WTC11 (cell line): ENCODE measurements at regions of chr2 and their contacts with region 1.

Region 1: DNA sequence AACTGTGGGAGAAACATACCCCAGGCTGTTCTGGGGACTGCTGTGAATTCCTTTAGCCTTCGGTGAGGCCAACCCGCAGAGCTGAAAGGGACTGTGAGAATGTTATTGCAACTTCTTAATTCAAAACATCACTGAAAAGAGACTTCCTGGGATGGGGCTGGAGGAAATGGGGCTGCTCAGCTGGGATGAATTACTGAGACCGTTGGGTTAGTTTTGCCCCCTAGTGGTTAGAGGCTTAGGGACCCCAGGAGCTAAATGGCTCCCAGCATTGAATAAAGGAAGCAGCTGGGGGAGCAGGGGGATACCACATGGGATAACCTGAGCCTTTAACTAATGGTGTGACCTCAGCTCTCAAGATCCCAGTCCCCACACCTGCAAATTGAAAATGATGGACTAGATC is 941.1 kb upstream of the FANCL start:
- DNase-seq: peak; percentile 61
- ATAC-seq: peak; percentile 97
- H3K4me3 Mint-ChIP-seq: no peak overlapping the region
- H3K27ac Mint-ChIP-seq: no peak overlapping the region
- H3K4me1 Mint-ChIP-seq: peaks cover 24% of the 10 kb centered on the region
- H3K27me3 Mint-ChIP-seq: peaks cover 50% of the 10 kb centered on the region
- CTCF ChIP-seq: peak; percentile 40

Region 2: DNA sequence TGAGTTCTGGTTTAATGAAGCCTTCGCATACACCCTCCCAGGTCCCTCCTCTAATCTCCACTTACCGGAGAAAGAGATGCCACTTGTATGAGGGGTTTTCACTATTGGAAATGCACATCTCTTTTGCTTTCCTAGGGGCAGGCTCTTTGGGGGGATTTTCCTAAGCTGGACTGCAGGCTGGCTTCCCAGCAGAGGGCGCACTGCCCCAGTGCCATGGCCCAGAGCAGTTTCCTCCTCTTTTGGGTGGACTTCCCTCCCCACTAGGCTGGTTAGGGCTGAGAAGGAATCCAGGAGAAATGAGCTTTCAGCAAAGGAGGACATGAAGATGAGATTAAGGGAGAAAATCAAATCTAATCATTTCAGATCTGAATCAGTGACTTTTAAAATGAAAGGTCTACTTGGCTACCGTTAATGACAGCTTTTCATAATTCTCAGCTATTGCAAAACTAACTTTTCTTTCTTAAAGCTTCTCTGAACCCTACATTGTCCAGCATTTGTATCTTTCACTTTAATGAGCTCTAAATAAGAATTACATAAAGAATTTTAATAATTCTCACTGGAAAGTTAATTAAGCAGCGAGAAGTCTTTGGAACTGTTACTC is 157.0 kb before region 1 on chr2:
- CTCF ChIA-PET with region 1: interaction called, 26 read pairs
- POLR2A ChIA-PET with region 1: no interaction called
- DNase-seq: peak; percentile 74
- ATAC-seq: peak; percentile 96
- H3K4me3 Mint-ChIP-seq: no peak overlapping the region
- H3K27ac Mint-ChIP-seq: no peak overlapping the region
- H3K4me1 Mint-ChIP-seq: no peaks in the 10 kb centered on the region; the same call in 1 of the 2 replicates
- H3K27me3 Mint-ChIP-seq: no peaks in the 10 kb centered on the region
- CTCF ChIP-seq: peak; percentile 74

Region 3: DNA sequence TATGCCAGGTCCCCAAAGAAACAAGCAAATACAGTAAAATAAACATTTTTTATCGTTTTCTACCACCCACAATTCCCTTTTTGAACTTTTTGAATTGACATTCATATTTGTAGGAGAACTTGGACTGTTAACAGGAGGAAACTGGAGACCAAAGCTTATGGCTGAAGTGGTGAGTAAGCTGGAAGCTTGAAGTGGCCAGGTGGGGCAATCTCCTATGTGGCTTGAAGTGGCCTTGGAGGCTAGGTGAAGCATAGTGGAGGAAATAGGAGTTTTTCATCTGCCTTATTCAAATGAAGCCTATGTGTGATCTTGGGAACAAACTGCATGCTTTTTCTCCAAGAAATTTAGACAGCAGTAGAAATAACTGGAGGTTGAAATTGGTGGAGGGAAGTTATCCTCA is 21.8 kb after region 1 on chr2:
- CTCF ChIA-PET with region 1: no interaction called
- POLR2A ChIA-PET with region 1: no interaction called
- DNase-seq: no peak
- ATAC-seq: no peak
- H3K4me3 Mint-ChIP-seq: no peak overlapping the region
- H3K27ac Mint-ChIP-seq: no peak overlapping the region
- H3K4me1 Mint-ChIP-seq: peaks cover 5% of the 10 kb centered on the region; the same call in 1 of the 2 replicates
- H3K27me3 Mint-ChIP-seq: no peaks in the 10 kb centered on the region; the same call in 1 of the 2 replicates
- CTCF ChIP-seq: no peak